MCF 10A (cell line): ENCODE measurements at regions of chr2 and their contacts with region 1.

Region 1: DNA sequence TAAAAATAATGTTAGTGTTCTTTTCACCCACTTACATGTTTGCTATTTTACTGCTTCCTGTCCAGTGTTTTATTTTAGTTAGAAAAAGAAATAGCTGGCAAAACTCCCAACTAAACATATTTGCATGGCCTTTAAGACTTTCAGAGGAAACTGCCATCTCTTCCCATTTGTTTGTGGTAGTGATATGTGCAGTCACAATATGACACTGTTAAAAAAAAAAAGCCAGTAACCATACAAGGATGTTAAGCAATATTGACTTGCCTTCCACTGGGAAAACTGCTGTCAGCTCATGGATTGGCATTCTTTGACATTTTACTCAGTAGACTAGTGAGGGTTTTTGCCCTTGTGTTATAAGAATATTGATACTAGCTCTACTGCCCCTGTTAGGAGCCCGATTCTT is 29.1 kb downstream of the XIRP2 start:
- DNase-seq: no peak
- H3K4me3 Mint-ChIP-seq: no peak overlapping the region
- H3K27ac Mint-ChIP-seq: no peak overlapping the region
- H3K4me1 Mint-ChIP-seq: no peaks in the 10 kb centered on the region
- H3K27me3 Mint-ChIP-seq: peaks cover 13% of the 10 kb centered on the region
- CTCF ChIP-seq: no peak

Region 2: GRCh38 chr2:166899676-166900075 is 17.7 kb before region 1 on chr2:
- CTCF ChIA-PET with region 1: no interaction called
- POLR2A ChIA-PET with region 1: no interaction called
- intact Hi-C with region 1: no loop called
- DNase-seq: no peak
- H3K4me3 Mint-ChIP-seq: no peak overlapping the region
- H3K27ac Mint-ChIP-seq: no peak overlapping the region
- H3K4me1 Mint-ChIP-seq: no peaks in the 10 kb centered on the region
- H3K27me3 Mint-ChIP-seq: peaks cover 53% of the 10 kb centered on the region
- CTCF ChIP-seq: no peak

Region 3: GRCh38 chr2:166934817-166935216 is 17.4 kb after region 1 on chr2:
- CTCF ChIA-PET with region 1: no interaction called
- POLR2A ChIA-PET with region 1: no interaction called
- intact Hi-C with region 1: loop called (anchors 1 kb)
- DNase-seq: no peak
- H3K4me3 Mint-ChIP-seq: no peak overlapping the region
- H3K27ac Mint-ChIP-seq: no peak overlapping the region
- H3K4me1 Mint-ChIP-seq: no peaks in the 10 kb centered on the region
- H3K27me3 Mint-ChIP-seq: no peaks in the 10 kb centered on the region
- CTCF ChIP-seq: no peak